ENCODE measurements at regions of chr9 and their contacts with region 1.

Region 1: DNA sequence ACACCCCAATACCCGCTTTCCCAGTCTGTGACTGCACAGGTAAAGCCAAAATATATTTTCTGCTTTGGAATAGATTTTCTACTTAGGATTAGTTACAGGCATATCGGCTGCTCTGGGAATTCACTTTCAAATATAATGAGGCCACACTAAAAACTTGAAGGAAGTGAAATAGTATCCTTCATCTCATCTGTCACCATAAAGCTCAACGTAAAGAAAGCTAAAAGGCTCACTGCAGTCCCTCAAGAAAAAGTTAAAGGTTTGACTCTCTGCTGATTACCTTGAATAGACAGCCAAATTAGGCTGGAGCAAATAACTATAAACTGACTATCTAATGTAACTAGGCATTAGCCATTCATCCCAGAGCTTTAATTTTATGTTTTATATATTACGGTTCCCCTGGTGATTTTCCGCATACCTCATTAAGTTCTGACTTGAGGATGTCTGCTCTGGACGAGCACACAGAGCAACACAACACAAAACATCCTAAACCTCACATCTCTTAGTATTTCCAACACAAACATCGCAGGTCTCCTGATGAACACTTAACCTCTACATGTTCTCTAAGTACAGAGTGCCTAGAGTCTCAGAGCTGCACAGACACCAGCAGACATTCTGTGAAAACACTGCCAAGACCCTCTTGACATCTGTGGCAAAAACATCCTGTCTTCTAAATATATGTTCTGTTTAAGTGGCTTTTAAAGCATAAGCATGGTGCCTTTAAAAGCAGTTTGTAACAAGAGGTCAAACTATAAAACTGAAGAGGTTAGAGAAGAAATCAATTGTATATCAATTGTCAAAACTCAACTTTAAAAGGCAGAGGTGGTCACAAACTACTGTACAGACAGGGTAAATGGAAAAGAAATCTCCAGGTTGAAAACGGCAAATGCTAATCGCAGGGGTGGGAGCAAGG is 35.4 kb downstream of the ELAVL2 start:
- DNase-seq: no peak
- ATAC-seq: no peak; the same call in 2 of the 3 replicates
- H3K4me3 ChIP-seq: no peak overlapping the region
- H3K27ac ChIP-seq: no peak overlapping the region
- H3K4me1 ChIP-seq: no peaks in the 10 kb centered on the region
- H3K27me3 ChIP-seq: no peaks in the 10 kb centered on the region
- CTCF ChIP-seq: no peak
- EP300 ChIP-seq: no peak
- POLR2A ChIP-seq: no peak
- RAD21 ChIP-seq: no peak

Region 2: DNA sequence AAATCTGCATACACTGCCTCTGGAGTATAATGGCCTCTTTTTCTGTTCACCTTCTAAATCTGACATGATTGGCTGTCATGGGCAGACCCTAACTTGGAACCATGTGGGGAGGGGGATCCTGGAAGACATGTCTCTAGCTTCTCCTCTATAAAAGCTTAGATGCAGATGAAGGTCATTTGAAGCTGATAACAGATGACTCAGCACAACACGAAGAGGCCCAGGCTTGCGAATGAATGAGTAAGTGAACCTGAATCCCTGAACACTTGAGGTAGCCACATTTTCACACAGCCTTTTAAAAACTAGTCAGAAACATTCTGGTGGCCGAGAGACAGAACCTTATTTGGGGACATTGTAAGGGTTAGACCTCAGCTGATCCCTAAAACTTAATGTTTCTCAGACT is 247.2 kb before region 1 on chr9:
- CTCF ChIA-PET with region 1: no interaction called
- POLR2A ChIA-PET with region 1: no interaction called
- RAD21 ChIA-PET with region 1: no interaction called
- SMC1A ChIA-PET with region 1: no interaction called
- in situ Hi-C with region 1: no loop called
- intact Hi-C with region 1: no loop called
- DNase-seq: no peak
- ATAC-seq: no peak
- H3K4me3 ChIP-seq: no peak overlapping the region
- H3K27ac ChIP-seq: no peak overlapping the region
- H3K4me1 ChIP-seq: no peaks in the 10 kb centered on the region
- H3K27me3 ChIP-seq: no peaks in the 10 kb centered on the region
- CTCF ChIP-seq: no peak
- EP300 ChIP-seq: no peak
- POLR2A ChIP-seq: no peak
- RAD21 ChIP-seq: no peak

Region 3: GRCh38 chr9:23803216-23803615 is 12.6 kb after region 1 on chr9:
- CTCF ChIA-PET with region 1: interaction called, 4 read pairs
- POLR2A ChIA-PET with region 1: interaction called, 6 read pairs
- RAD21 ChIA-PET with region 1: interaction called, 7 read pairs
- SMC1A ChIA-PET with region 1: interaction called, 13 read pairs
- in situ Hi-C with region 1: no loop called
- intact Hi-C with region 1: no loop called
- DNase-seq: no peak
- ATAC-seq: peak; percentile 73
- H3K4me3 ChIP-seq: no peak overlapping the region
- H3K27ac ChIP-seq: no peak overlapping the region
- H3K4me1 ChIP-seq: no peaks in the 10 kb centered on the region
- H3K27me3 ChIP-seq: no peaks in the 10 kb centered on the region
- CTCF ChIP-seq: no peak
- EP300 ChIP-seq: no peak
- POLR2A ChIP-seq: no peak
- RAD21 ChIP-seq: no peak

Region 4: GRCh38 chr9:24832308-24832707 is 1041.7 kb after region 1 on chr9:
- CTCF ChIA-PET with region 1: no interaction called
- POLR2A ChIA-PET with region 1: no interaction called
- RAD21 ChIA-PET with region 1: no interaction called
- SMC1A ChIA-PET with region 1: no interaction called
- in situ Hi-C with region 1: no loop called
- intact Hi-C with region 1: no loop called
- DNase-seq: no peak
- ATAC-seq: no peak
- H3K4me3 ChIP-seq: no peak overlapping the region
- H3K27ac ChIP-seq: no peak overlapping the region
- H3K4me1 ChIP-seq: no peaks in the 10 kb centered on the region
- H3K27me3 ChIP-seq: no peaks in the 10 kb centered on the region
- CTCF ChIP-seq: peak in 1 of 3 experiments; percentile 24; a peak in 1 of 6 replicates
- EP300 ChIP-seq: no peak
- POLR2A ChIP-seq: no peak
- RAD21 ChIP-seq: no peak

Measured in GM12878 (cell line).